CD4-positive, alpha-beta memory T cell (primary cell): ENCODE measurements at regions of chr13 and their contacts with region 1.

Region 1: GRCh38 chr13:60431108-60431700 is 34.2 kb downstream of the TDRD3 start:
- DNase-seq: peak in 4 of 5 donors; percentile 49 to 56 (median 52)
- H3K4me3 ChIP-seq: no peak overlapping the region
- H3K4me3 Mint-ChIP-seq: no peak overlapping the region
- H3K27ac ChIP-seq: no peak overlapping the region
- H3K27ac Mint-ChIP-seq: no peak overlapping the region
- H3K4me1 ChIP-seq: peaks cover 34% of the 10 kb centered on the region
- H3K4me1 Mint-ChIP-seq: peaks cover 27 to 36% (median 33%) of the 10 kb centered on the region in 4 donors
- H3K27me3 ChIP-seq: no peaks in the 10 kb centered on the region
- H3K27me3 Mint-ChIP-seq: no peaks in the 10 kb centered on the region

Region 2: DNA sequence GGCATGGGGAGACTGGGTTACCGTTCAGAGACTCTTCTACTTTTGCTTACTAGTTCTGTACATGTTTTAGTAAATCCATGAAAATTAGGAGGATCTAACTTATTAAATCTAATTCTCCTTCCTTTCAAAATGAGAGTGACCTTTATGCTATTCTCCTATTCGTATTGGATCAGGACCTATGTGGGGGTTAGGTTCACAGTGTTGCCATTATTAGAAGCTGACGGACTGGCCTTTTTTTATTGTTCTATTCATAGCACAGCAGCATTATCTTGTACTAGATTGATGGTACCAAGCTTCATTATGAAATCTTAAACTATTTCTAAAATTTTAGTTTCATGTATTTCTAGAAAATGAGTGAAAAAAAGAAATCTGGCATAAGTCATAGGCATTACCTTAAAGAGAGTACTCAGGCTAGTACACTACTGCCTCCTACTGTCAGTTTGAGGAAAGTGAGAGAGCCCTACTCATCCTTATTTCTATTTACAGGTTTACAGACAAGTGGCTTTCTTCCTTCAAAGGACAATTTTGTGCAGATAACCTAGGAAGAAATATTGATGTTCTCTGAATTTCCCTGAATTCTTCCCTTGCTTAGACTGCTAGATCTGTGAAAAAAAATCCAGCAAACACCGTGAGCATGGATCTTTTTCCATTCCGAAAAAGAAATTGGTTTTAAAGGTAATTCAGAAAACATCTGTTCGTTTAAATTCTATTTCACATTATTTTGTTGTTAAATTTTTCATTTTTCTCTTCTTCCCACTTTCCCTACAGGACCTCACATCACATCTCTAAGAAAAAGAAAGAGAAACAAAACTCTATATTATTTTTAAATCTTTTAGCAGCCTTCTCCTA is 753.0 kb before region 1 on chr13:
- CTCF ChIA-PET with region 1: interaction called, 32 read pairs
- POLR2A ChIA-PET with region 1: no interaction called
- intact Hi-C with region 1: loop called (anchors 1 kb)
- DNase-seq: peak in 4 of 5 donors; percentile 23 to 38 (median 34)
- H3K4me3 ChIP-seq: no peak overlapping the region
- H3K4me3 Mint-ChIP-seq: no peak overlapping the region
- H3K27ac ChIP-seq: no peak overlapping the region
- H3K27ac Mint-ChIP-seq: no peak overlapping the region
- H3K4me1 ChIP-seq: peaks cover 6% of the 10 kb centered on the region
- H3K4me1 Mint-ChIP-seq: peaks cover 0 to 6% (median under 1%) of the 10 kb centered on the region in 4 donors
- H3K27me3 ChIP-seq: no peaks in the 10 kb centered on the region
- H3K27me3 Mint-ChIP-seq: no peaks in the 10 kb centered on the region

Region 3: DNA sequence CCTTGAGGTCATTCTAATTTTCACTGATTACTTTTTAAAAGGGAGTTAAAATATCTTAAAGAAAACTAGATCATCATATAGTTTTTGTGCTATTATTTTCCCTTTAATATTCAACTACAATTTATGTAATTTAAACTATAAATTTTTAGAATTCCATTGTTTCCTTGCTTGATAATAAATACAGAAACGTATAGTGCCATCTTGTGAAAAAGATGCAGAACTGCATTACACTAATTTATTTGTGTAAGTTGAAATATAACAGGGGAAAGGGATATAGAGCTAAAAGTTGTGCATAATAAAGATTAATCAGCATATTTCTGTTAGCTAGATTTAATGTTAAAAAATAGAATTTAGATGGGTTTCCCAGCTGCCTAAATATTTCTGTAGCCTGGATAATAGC is 95.7 kb before region 1 on chr13:
- CTCF ChIA-PET with region 1: interaction called, 3 read pairs
- POLR2A ChIA-PET with region 1: no interaction called
- intact Hi-C with region 1: loop called (anchors 2 kb)
- DNase-seq: peak in 1 of 5 donors; percentile 6
- H3K4me3 ChIP-seq: no peak overlapping the region
- H3K4me3 Mint-ChIP-seq: no peak overlapping the region
- H3K27ac ChIP-seq: no peak overlapping the region
- H3K27ac Mint-ChIP-seq: no peak overlapping the region
- H3K4me1 ChIP-seq: no peaks in the 10 kb centered on the region
- H3K4me1 Mint-ChIP-seq: no peaks in the 10 kb centered on the region
- H3K27me3 ChIP-seq: no peaks in the 10 kb centered on the region
- H3K27me3 Mint-ChIP-seq: peaks cover 0 to 1% of the 10 kb centered on the region in 2 donors

Region 4: GRCh38 chr13:60396783-60397703 is 34.2 kb before region 1 on chr13 and contains the start of gene TDRD3:
- CTCF ChIA-PET with region 1: interaction called, 30 read pairs
- POLR2A ChIA-PET with region 1: interaction called, 8 read pairs
- intact Hi-C with region 1: loop called (anchors 1 kb)
- DNase-seq: peak; percentile 81 to 85 (median 84)
- H3K4me3 ChIP-seq: peak within 1 kb of the TSS; percentile 67 to 88
- H3K4me3 Mint-ChIP-seq: peak within 1 kb of the TSS; percentile 90 to 96 (median 95)
- H3K27ac ChIP-seq: peak within 1 kb of the TSS; percentile 76
- H3K27ac Mint-ChIP-seq: peak within 1 kb of the TSS; percentile 94 to 97 (median 96)
- H3K4me1 ChIP-seq: peaks cover 32% of the 10 kb centered on the region
- H3K4me1 Mint-ChIP-seq: peaks cover 21 to 50% (median 29%) of the 10 kb centered on the region in 4 donors
- H3K27me3 ChIP-seq: no peaks in the 10 kb centered on the region
- H3K27me3 Mint-ChIP-seq: no peaks in the 10 kb centered on the region
- total RNA-seq, gene TDRD3: 29.4 to 34.9 TPM